Heart right ventricle (tissue), 16 donors: ENCODE measurements at regions of chr3 and their contacts with region 1.

Region 1: DNA sequence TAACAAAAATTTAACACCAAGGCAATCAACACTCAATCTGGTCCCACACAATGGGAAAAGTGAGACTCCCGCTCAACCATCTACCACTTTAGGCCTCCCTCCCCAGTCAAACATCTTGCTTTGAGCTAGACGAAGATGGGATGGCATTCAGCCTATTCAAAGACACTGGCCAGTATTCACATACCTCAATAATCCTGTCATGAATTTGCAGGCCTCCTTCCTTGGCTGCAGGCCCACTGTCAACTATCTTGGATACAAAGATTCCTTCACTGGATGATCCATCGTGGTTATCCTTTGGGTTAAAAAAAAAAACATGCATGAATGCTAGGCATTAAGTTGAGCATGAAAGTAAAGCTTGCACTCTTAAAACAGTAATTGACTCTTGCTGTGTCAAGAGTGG is 22.6 kb downstream of the PDZRN3 start:
- DNase-seq: no peak
- ATAC-seq: peak in 4 of 8 donors; percentile 28 to 77 (median 47)
- H3K4me3 ChIP-seq: no peak overlapping the region
- H3K27ac ChIP-seq: peak overlapping the region in 6 of 10 donors; percentile 9 to 67 (median 47)
- H3K4me1 ChIP-seq: peaks cover 0 to 87% (median 48%) of the 10 kb centered on the region in 9 donors
- H3K27me3 ChIP-seq: no peaks in the 10 kb centered on the region
- CTCF ChIP-seq: no peak

Region 2: DNA sequence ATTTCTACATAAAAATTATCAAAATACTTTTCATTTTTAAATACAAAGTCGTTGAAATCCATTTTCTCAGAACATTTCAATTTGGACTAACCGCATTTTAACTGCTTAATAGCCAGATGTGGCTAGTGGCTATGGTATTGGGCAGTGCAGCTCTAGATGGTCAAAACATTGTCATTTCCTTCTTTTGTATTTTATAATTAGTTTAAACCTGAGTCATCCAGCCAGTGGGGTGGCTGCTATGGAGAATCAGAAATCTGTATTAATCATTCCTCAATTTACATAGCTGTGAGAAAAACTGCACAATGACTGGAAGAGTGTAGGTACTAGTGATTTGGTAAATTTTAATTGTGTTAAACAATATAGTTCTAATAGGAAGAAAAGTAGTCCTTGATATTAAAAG is 222.7 kb before region 1 on chr3:
- intact Hi-C with region 1: no loop called
- DNase-seq: no peak
- ATAC-seq: no peak
- H3K4me3 ChIP-seq: no peak overlapping the region
- H3K27ac ChIP-seq: no peak overlapping the region
- H3K4me1 ChIP-seq: no peaks in the 10 kb centered on the region
- H3K27me3 ChIP-seq: no peaks in the 10 kb centered on the region
- CTCF ChIP-seq: no peak

Region 3: GRCh38 chr3:73520865-73521461 is 81.2 kb before region 1 on chr3:
- intact Hi-C with region 1: loop called in 3 of 10 experiments (anchors 5 to 10 kb)
- DNase-seq: peak in 1 of 2 donors; percentile 19
- ATAC-seq: peak; percentile 33 to 74 (median 64)
- H3K4me3 ChIP-seq: peak overlapping the region in 3 of 10 donors; percentile 13 to 16 (median 15)
- H3K27ac ChIP-seq: peak overlapping the region in 8 of 10 donors; percentile 32 to 62 (median 55)
- H3K4me1 ChIP-seq: peaks cover 7 to 55% (median 32%) of the 10 kb centered on the region in 9 donors
- H3K27me3 ChIP-seq: no peaks in the 10 kb centered on the region
- CTCF ChIP-seq: no peak

Region 4: GRCh38 chr3:74515451-74515850 is 913.3 kb after region 1 on chr3:
- intact Hi-C with region 1: no loop called
- DNase-seq: no peak
- ATAC-seq: no peak
- H3K4me3 ChIP-seq: no peak overlapping the region
- H3K27ac ChIP-seq: no peak overlapping the region
- H3K4me1 ChIP-seq: no peaks in the 10 kb centered on the region
- H3K27me3 ChIP-seq: no peaks in the 10 kb centered on the region
- CTCF ChIP-seq: no peak